Activated CD4-positive, alpha-beta memory T cell treated with anti-CD3 and anti-CD28 coated beads, Interleukin-2, amount 10 ng/mL, durations not matched to agents 7 days and 5 days (primary cell): ENCODE measurements at regions of chr10 and their contacts with region 1.

Region 1: DNA sequence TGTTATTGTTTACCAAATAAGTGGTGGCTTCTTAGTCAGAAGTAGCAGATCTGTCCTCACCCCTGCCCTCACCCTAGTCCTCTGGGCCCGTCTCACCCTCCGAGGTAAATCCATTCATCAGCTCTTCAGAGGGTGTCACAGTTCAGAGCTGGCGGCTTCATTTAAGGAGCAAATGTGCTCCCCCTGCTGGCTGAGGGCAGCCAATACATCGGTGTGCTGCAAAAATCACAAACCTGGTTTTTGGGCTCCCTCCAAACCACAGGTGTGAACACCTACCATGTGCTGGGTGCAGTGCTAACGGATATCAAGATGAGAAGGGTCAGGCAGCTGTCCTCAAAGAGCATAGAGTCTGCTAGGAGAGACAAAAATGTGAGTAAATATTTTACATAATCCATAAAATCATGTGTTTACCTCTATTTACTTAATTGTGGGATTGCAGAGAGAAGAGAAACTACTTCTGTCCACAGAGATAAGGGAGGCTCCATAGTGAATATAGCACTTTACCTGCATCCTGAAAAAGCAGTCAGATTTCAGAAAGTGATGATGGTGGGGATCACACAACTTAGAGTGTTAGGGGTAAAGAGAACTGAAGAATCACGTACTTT is 15.5 kb upstream of the CRTAC1 start:
- DNase-seq: peak; percentile 65
- H3K4me3 Mint-ChIP-seq: no peak overlapping the region
- H3K27ac Mint-ChIP-seq: no peak overlapping the region
- H3K4me1 Mint-ChIP-seq: no peaks in the 10 kb centered on the region
- H3K27me3 Mint-ChIP-seq: peaks cover 29% of the 10 kb centered on the region

Region 2: GRCh38 chr10:97792141-97792721 is 253.7 kb before region 1 on chr10:
- CTCF ChIA-PET with region 1: interaction called, 10 read pairs
- POLR2A ChIA-PET with region 1: no interaction called
- DNase-seq: peak; percentile 78
- H3K4me3 Mint-ChIP-seq: no peak overlapping the region
- H3K27ac Mint-ChIP-seq: peak overlapping the region; percentile 24
- H3K4me1 Mint-ChIP-seq: peaks cover 33% of the 10 kb centered on the region
- H3K27me3 Mint-ChIP-seq: peaks cover 12% of the 10 kb centered on the region

Region 3: DNA sequence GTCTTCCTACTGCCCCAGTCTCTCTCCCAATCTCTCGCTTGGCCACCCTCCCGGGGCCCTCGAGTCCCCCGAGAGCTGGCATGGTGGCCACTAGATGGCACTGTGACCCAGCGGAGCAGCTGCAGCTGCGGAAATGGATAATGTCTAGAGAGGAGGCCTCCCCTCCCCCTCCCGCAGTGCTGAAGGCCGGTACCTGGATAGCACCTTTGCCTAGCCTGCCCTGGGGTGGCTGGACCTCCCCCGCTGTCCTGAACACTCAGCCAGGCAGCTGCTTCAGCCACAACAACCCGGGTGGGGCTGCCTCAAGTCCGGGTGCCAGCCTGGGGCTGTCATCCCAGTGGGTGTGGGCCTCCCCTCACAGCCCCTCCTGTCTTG is 131.1 kb before region 1 on chr10:
- CTCF ChIA-PET with region 1: interaction called, 152 read pairs
- POLR2A ChIA-PET with region 1: interaction called, 5 read pairs
- DNase-seq: peak; percentile 76
- H3K4me3 Mint-ChIP-seq: no peak overlapping the region
- H3K27ac Mint-ChIP-seq: no peak overlapping the region
- H3K4me1 Mint-ChIP-seq: peaks cover 5% of the 10 kb centered on the region
- H3K27me3 Mint-ChIP-seq: peaks cover 18% of the 10 kb centered on the region

Region 4: GRCh38 chr10:98028168-98028770 is 17.6 kb before region 1 on chr10:
- CTCF ChIA-PET with region 1: interaction called, 26 read pairs
- POLR2A ChIA-PET with region 1: no interaction called
- DNase-seq: peak; percentile 69
- H3K4me3 Mint-ChIP-seq: no peak overlapping the region
- H3K27ac Mint-ChIP-seq: no peak overlapping the region
- H3K4me1 Mint-ChIP-seq: peaks cover 3% of the 10 kb centered on the region
- H3K27me3 Mint-ChIP-seq: peaks cover 54% of the 10 kb centered on the region

Region 5: GRCh38 chr10:98067165-98067564 is 21.3 kb after region 1 on chr10:
- CTCF ChIA-PET with region 1: interaction called, 16 read pairs
- POLR2A ChIA-PET with region 1: no interaction called
- DNase-seq: no peak
- H3K4me3 Mint-ChIP-seq: no peak overlapping the region
- H3K27ac Mint-ChIP-seq: no peak overlapping the region
- H3K4me1 Mint-ChIP-seq: no peaks in the 10 kb centered on the region
- H3K27me3 Mint-ChIP-seq: peaks cover 6% of the 10 kb centered on the region

Region 6: DNA sequence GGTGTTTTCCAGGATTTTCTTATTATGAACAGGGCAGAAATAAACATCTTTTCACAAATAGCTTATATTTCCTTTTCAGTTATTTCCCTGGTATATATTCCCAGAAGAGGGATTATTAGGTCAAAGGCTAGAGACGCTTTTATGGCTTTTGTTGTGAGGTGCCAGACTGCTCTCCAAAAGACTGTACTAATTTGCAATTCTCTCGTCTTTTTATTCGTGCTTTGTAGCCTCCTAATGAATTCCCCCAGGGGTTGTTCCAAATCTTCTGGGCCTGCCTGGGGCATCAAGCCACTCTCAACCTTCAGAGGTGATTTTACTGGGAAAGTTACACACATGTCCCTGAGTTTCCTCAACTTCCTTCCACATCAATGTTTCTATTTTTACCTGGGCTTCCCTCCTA is 54.6 kb after region 1 on chr10:
- CTCF ChIA-PET with region 1: no interaction called
- POLR2A ChIA-PET with region 1: no interaction called
- DNase-seq: no peak
- H3K4me3 Mint-ChIP-seq: no peak overlapping the region
- H3K27ac Mint-ChIP-seq: no peak overlapping the region
- H3K4me1 Mint-ChIP-seq: no peaks in the 10 kb centered on the region
- H3K27me3 Mint-ChIP-seq: peaks cover 6% of the 10 kb centered on the region

Region 7: DNA sequence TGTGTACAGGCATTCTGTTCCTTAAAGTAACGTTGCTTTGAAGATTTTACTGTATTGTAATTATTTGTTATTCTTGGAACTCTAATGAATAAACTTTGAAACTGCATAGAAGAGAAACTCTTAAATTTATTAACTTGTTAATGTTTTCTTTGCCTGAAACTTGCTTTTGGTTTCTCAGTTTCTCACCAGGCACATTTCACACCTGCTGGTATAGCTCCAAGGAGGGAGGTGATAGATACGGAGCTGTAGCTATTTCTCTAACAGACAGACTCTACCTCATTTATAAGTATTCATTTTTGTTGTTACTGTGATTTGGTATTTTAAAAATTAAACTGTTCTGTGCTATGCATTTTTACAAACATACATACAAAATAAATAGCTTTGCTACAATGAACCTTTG is 121.3 kb after region 1 on chr10:
- CTCF ChIA-PET with region 1: no interaction called
- POLR2A ChIA-PET with region 1: no interaction called
- DNase-seq: no peak
- H3K4me3 Mint-ChIP-seq: no peak overlapping the region
- H3K27ac Mint-ChIP-seq: no peak overlapping the region
- H3K4me1 Mint-ChIP-seq: peaks cover 4% of the 10 kb centered on the region
- H3K27me3 Mint-ChIP-seq: no peaks in the 10 kb centered on the region

Region 8: DNA sequence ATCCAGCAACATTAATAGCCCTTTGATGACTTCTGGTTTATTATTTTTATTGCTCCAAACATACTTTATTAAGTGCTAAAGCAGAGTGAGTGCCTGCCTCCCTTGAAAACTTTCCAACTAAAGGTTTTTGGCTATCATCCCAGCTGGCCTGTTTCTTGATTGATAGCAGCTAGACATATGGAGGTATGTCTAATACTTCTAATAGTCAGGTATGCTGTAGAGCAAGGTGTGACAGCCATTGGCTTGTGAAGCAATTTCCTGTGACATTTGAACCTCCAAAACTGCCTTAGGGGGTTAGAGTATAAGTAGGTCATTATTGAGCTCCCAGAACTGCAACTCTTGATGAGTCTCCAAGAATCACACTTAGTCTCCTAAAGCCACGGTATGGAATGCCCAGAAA is 166.3 kb after region 1 on chr10:
- CTCF ChIA-PET with region 1: no interaction called
- POLR2A ChIA-PET with region 1: no interaction called
- DNase-seq: no peak
- H3K4me3 Mint-ChIP-seq: no peak overlapping the region
- H3K27ac Mint-ChIP-seq: no peak overlapping the region
- H3K4me1 Mint-ChIP-seq: peaks cover 10% of the 10 kb centered on the region
- H3K27me3 Mint-ChIP-seq: no peaks in the 10 kb centered on the region

Region 9: GRCh38 chr10:98370831-98371820 is 325.2 kb after region 1 on chr10:
- CTCF ChIA-PET with region 1: no interaction called
- POLR2A ChIA-PET with region 1: no interaction called
- DNase-seq: no peak
- H3K4me3 Mint-ChIP-seq: no peak overlapping the region
- H3K27ac Mint-ChIP-seq: no peak overlapping the region
- H3K4me1 Mint-ChIP-seq: no peaks in the 10 kb centered on the region
- H3K27me3 Mint-ChIP-seq: peaks cover 28% of the 10 kb centered on the region